ENCODE measurements at regions of chr3 and their contacts with region 1.

Region 1: DNA sequence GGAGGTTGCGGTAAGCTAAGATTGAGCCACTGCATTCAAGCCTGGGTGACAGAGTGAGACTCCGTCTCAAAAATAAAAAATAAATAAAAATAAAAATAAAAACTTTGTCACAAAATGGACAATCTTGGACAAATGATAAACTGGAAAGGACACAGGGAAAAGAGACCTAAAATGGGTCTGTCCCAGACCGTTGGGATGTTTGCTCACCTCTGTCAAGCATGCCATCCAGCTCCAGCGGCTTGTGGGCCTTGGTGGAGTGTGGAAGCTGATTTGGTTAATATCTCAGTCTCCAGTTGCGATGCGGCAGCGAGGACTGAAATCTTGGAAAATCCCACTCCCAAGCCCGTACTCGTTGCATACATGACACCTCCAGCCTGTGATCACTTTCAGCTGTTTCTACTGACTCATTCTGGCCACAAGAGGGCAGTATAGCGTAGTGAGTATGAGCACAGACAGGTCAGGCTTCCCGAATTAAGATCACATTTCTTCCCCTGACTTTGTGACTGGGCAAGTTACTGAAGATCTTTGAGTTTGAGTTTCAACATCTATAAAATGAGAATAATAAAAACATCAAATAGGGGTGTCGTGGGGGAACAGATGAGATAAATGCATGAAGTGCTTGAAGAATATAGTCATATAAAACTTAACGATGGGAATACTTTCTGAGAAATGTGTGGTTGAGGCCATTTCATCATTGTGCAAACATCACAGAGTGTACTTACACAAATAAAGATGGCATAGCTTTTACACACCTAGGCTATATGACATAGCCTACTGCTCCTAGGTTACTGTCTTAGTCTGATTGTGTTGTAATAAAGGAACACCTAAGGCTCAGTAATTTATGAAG is 19.6 kb upstream of the MOBP start:
- ATAC-seq: peak; percentile 81 to 100 (median 92)
- H3K4me3 ChIP-seq: no peak overlapping the region
- H3K27ac ChIP-seq: no peak overlapping the region
- H3K4me1 ChIP-seq: no peaks in the 10 kb centered on the region

Region 2: GRCh38 chr3:39499651-39500240 is 51.9 kb after region 1 on chr3:
- in situ Hi-C with region 1: loop called in 1 of 9 experiments (anchors 10 kb)
- ATAC-seq: peak in 2 of 8 experiments; percentile 16 to 45
- H3K4me3 ChIP-seq: no peak overlapping the region
- H3K27ac ChIP-seq: no peak overlapping the region
- H3K4me1 ChIP-seq: peaks cover 0 to 3% of the 10 kb centered on the region in 2 donors

Region 3: DNA sequence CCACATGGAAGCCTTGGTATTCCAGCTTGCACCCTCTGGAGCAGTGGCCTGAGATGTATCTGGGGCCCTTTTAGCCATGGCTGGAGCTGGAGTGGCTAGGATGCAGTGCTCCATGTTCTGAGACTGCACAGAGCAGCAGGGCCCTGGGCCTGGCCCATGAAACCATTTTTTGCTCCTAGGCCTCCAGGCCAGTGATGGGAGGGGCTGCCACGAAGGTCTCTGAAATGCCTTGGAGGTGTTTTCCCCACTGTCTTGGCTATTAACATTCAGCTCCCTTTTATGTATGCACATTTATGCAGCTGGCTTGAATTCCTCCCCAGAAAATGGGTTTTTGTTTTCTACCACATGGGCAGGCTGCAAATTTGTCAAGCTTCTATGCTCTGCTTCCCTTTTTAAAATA is 318.6 kb after region 1 on chr3:
- in situ Hi-C with region 1: no loop called
- ATAC-seq: peak in 3 of 8 experiments; percentile 61 to 83 (median 81)
- H3K4me3 ChIP-seq: no peak overlapping the region
- H3K27ac ChIP-seq: no peak overlapping the region
- H3K4me1 ChIP-seq: no peaks in the 10 kb centered on the region

Region 4: DNA sequence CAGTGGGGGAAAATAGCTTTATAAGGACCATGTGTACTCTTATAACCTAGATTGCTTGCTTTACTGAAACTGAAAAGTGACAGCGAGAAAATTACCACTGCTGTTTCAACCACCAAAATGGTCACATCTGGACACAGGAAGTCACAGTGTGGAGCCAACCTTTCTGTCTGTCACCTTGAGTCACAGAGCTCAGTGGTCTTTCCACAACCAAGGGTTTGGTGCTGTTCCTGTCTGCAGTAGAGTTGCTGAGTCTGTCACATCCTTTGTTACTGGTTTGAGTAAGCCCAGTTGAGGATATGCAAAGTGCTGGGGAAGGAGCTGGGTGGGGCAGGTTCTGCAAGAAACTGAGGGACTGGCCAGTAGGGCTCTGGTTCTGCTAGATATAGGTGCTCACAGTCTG is 722.5 kb after region 1 on chr3:
- in situ Hi-C with region 1: loop called in 2 of 9 experiments (anchors 25 kb)
- ATAC-seq: peak in 2 of 8 experiments; percentile 90 to 94
- H3K4me3 ChIP-seq: no peak overlapping the region
- H3K27ac ChIP-seq: no peak overlapping the region
- H3K4me1 ChIP-seq: peaks cover 0 to 2% of the 10 kb centered on the region in 2 donors

Region 5: DNA sequence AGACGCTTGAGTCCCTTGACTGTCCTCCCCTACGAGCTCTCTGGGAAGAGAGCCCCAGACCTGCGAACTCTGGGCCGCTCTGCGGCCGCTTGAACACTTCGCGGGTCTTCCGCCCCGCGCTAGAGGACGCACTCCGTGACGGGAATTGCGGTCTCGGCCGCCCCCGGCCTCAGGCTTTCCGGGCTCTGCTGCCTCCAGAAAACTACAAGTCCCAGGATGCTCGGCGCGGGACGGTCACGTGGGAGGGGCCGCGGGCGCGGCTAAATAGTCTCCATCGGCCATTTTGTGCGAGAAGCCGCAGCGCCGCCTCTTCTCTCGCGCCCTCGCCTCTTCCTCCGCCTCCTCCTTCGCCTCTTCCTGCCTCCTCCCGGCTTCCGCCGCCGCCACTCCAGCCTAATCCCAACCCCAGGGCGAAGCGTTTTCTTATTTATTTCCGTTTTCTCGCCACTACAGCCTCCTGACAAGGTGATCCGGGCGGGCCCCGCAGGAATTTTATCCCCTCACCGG is 861.6 kb after region 1 on chr3 and contains the start of gene EIF1B:
- in situ Hi-C with region 1: loop called in 1 of 9 experiments (anchors 25 kb)
- ATAC-seq: peak; percentile 87 to 96 (median 94)
- H3K4me3 ChIP-seq: peak within 1 kb of the TSS; percentile 77 to 96 (median 91)
- H3K27ac ChIP-seq: peak within 1 kb of the TSS; percentile 96 to 97
- H3K4me1 ChIP-seq: peaks cover 6 to 10% of the 10 kb centered on the region in 2 donors
- total RNA-seq, gene EIF1B: 25.1 to 150 (median 63.5) TPM